Activated CD8-positive, alpha-beta memory T cell treated with anti-CD3 and anti-CD28 coated beads, Interleukin-2, amount 10 ng/mL, durations not matched to agents 7 days and 5 days (primary cell): ENCODE measurements at regions of chr16 and their contacts with region 1.

Region 1: GRCh38 chr16:57475711-57476339 is 10.5 kb downstream of the DOK4 start:
- DNase-seq: peak; percentile 93
- ATAC-seq: peak; percentile 99
- H3K4me3 Mint-ChIP-seq: peak overlapping the region; percentile 45
- H3K27ac Mint-ChIP-seq: peak overlapping the region; percentile 73
- H3K4me1 Mint-ChIP-seq: peaks cover 16% of the 10 kb centered on the region
- H3K27me3 Mint-ChIP-seq: no peaks in the 10 kb centered on the region

Region 2: DNA sequence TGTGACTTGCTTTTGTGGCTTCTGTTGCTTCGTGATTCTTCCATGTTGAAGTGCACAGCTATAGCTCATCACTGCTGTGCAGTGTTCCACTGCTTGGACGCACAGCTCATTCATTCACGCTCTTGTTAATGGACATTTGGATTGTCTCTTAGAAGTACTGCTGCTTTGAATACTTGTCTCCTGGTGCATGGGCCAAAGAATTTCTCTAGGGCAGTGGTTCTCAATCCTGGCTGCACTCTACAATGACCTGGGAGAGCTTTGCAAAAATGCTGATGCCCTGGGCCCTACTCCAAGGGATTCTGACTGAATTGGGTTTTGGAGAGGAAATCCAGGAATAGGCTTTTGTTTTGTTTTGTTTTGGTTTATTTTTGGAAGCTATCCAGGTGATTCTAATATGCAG is 51.2 kb before region 1 on chr16:
- CTCF ChIA-PET with region 1: no interaction called
- DNase-seq: no peak
- ATAC-seq: no peak
- H3K4me3 Mint-ChIP-seq: no peak overlapping the region
- H3K27ac Mint-ChIP-seq: no peak overlapping the region
- H3K4me1 Mint-ChIP-seq: no peaks in the 10 kb centered on the region
- H3K27me3 Mint-ChIP-seq: no peaks in the 10 kb centered on the region

Region 3: GRCh38 chr16:57485916-57486857 is 10.4 kb after region 1 on chr16 and contains the start of gene DOK4:
- CTCF ChIA-PET with region 1: interaction called, 15 read pairs
- DNase-seq: peak; percentile 81
- ATAC-seq: peak; percentile 98
- H3K4me3 Mint-ChIP-seq: peak within 1 kb of the TSS; percentile 71
- H3K27ac Mint-ChIP-seq: peak within 1 kb of the TSS; percentile 49
- H3K4me1 Mint-ChIP-seq: peaks cover 22% of the 10 kb centered on the region
- H3K27me3 Mint-ChIP-seq: peaks cover 3% of the 10 kb centered on the region
- total RNA-seq, gene DOK4: 3.4 to 4.7 TPM

Region 4: DNA sequence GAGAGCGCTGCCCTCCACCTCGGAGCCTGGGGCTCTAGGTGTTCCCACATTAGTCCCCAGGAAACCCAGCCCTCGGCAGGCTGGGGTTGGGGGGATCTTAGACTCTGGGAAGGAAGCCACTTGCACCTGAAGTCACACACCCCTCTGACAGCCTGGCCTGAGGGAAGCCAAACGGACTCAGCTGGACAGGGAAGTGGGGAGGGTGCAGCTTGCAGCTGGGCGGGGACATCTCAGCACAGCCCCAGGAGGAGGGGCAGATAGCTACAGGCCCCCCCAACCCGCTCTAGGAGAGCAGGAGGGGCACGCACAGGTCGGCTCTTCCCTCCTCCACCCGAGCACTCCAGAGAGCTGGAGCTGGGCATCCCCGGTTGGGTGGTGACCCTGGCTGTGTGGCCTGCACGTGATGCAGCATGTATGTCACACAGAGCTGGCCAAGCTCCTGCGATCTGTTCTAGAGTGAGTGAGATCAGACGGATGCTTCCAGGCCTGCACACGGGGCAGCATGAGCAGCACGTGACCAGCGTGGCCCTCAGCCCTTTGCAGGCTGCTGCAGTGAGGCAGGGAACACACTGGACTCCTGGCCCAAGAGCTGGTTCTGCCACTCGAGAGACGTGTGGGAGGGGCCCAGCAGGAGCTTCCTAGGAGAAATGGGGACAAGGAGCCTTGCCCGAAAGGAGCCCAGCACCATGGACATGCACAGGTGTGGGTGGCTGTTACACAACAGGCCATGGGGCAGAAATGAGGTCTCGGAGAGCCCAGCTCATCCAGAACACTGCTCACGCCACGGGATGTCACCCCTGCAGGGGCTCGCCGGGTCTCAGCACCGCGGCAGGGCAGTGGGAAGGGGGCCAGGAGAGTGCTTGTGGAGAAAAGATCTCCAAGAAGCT is 311.1 kb after region 1 on chr16:
- CTCF ChIA-PET with region 1: no interaction called
- DNase-seq: no peak
- ATAC-seq: no peak
- H3K4me3 Mint-ChIP-seq: no peak overlapping the region
- H3K27ac Mint-ChIP-seq: no peak overlapping the region
- H3K4me1 Mint-ChIP-seq: no peaks in the 10 kb centered on the region
- H3K27me3 Mint-ChIP-seq: no peaks in the 10 kb centered on the region